Adrenal gland (tissue), 19 donors: ENCODE measurements at regions of chr21 and their contacts with region 1.

Region 1: DNA sequence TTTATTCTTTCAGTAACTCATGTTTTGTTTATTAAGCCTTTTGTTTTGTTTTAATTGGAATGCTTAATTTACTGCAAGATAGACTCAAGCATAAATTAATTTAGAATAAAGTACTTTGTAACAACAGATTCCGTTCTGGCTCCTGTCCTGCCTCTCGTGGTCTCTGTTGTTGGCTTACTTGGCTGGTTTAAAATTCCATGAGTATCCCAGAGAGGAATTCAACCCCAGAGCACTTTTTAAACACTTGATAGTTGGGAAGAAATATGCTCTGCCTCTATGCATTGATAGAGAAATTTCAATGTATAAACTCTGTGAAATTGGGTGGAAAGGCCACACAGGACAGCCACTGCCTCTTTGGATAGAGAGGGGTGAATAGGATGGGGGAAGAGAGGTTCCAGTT is 89.7 kb downstream of the ATP5PO start:
- DNase-seq: no peak
- H3K4me3 ChIP-seq: no peak overlapping the region
- H3K27ac ChIP-seq: no peak overlapping the region
- H3K4me1 ChIP-seq: peaks cover 0 to 8% of the 10 kb centered on the region in 2 donors
- H3K27me3 ChIP-seq: no peaks in the 10 kb centered on the region
- CTCF ChIP-seq: no peak
- POLR2A ChIP-seq: no peak

Region 2: DNA sequence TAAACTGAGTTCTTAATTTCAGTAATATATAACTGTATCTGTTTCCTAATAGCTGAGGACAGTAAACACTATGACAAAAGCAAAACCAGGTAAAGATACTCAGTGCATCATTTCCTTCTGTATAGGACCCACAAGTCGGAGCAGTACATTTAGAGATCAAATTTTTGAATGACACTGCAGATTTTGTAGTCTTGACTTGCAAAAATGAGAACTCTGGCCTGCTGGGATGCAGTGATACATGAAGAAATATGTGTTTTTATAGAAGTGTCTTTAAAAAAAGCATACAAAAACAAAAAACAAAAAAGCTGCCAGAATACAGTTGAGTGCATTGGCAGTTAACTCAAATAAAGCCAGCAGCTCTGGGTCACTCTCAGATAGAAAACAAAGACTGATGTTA is 303.0 kb before region 1 on chr21:
- intact Hi-C with region 1: no loop called
- DNase-seq: no peak
- H3K4me3 ChIP-seq: no peak overlapping the region
- H3K27ac ChIP-seq: no peak overlapping the region
- H3K4me1 ChIP-seq: no peaks in the 10 kb centered on the region
- H3K27me3 ChIP-seq: no peaks in the 10 kb centered on the region
- CTCF ChIP-seq: no peak
- POLR2A ChIP-seq: no peak

Region 3: DNA sequence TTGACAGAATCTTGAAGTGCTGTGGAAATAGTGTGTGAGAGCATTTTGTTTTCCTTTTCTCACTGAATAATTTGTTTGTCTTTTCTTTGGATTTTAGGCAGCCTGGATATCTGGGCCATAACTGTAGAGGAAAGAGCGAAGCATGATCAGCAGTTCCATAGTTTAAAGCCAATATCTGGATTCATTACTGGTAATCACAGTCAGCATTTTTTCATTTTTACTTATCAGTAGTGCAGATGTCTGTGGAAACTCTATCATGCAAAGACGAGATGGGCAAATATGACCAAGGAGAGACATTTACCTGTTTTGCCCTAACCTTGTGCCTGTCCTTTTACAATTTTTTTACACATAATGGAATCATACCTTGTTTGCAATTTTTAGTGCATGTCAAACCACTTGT is 104.8 kb before region 1 on chr21:
- intact Hi-C with region 1: no loop called
- DNase-seq: no peak
- H3K4me3 ChIP-seq: no peak overlapping the region
- H3K27ac ChIP-seq: no peak overlapping the region
- H3K4me1 ChIP-seq: no peaks in the 10 kb centered on the region
- H3K27me3 ChIP-seq: no peaks in the 10 kb centered on the region
- CTCF ChIP-seq: no peak
- POLR2A ChIP-seq: no peak

Region 4: GRCh38 chr21:33894736-33895288 is 68.9 kb after region 1 on chr21:
- intact Hi-C with region 1: loop called in 1 of 2 experiments (anchors 10 kb)
- DNase-seq: peak; percentile 74 to 92 (median 86)
- H3K4me3 ChIP-seq: peak overlapping the region in 2 of 4 donors; percentile 5 to 58
- H3K27ac ChIP-seq: no peak overlapping the region
- H3K4me1 ChIP-seq: peaks cover 8 to 16% of the 10 kb centered on the region in 2 donors
- H3K27me3 ChIP-seq: no peaks in the 10 kb centered on the region
- CTCF ChIP-seq: peak; percentile 59 to 86 (median 78)
- POLR2A ChIP-seq: no peak